ENCODE measurements at regions of chr9 and their contacts with region 1.

Region 1: DNA sequence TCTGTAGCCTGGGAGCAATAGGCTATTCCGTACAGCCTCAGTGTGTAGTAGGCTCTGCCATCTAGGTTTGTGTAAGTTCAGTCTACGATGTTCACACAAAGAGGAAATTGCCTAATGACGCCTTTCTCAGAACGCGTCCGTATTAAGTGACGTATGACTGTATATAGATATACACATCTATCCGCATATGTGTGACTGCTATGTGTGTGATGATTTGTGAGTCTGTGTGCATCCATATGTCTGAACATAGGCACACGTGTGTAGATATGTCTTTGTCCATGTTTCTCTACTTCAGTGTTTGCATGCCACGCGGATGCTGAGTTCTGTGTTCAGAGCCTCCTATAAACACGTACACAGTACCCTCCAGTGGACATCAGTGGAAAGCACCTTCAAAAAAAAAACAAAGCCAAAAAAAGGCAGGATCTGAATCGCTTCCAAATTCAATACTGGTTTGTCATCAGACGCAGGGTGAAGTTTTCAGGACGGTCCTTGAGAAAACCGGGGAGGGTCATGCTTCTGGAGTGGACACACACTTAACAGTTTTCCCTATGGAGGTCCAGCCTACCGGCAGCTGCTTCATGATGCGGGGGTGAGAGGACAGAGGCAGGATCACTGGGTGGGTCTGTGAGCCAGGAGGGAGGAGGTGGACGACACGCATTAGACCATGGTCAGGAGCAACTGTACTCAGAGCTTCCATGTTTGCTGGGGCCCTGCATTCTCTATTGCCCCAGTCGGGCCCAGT is 29.5 kb upstream of the ALDH1B1 start:
- DNase-seq: peak in 3 of 9 experiments; percentile 10 to 57 (median 36)
- ATAC-seq: peak; percentile 77
- H3K4me3 ChIP-seq: no peak overlapping the region
- H3K4me3 Mint-ChIP-seq: peak overlapping the region; percentile 72
- H3K27ac ChIP-seq: no peak overlapping the region
- H3K27ac Mint-ChIP-seq: no peak overlapping the region
- H3K4me1 ChIP-seq: no peaks in the 10 kb centered on the region
- H3K4me1 Mint-ChIP-seq: peaks cover 4% of the 10 kb centered on the region
- H3K27me3 ChIP-seq: no peaks in the 10 kb centered on the region
- H3K27me3 Mint-ChIP-seq: no peaks in the 10 kb centered on the region
- CTCF ChIP-seq: no peak

Region 2: DNA sequence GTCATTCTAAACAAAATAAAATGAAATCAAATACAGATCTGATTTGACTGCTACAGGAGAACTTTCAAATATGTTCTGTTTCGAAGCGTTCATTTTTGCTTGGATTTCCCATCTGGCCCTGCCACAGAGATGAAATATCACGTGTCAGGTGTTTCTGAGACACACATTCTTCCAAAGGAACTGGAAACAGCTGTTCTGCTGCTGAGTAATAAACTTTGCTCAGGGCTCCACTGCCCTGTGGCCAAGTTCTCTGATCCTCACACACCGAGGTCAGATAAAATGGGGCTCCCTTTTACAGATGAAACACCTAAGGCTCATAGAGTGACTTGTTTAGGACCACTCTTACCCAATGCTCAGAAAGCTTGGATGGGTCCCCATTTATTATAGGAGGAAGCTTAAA is 669.8 kb before region 1 on chr9:
- CTCF ChIA-PET with region 1: no interaction called
- POLR2A ChIA-PET with region 1: no interaction called
- intact Hi-C with region 1: no loop called
- DNase-seq: no peak
- ATAC-seq: no peak
- H3K4me3 ChIP-seq: no peak overlapping the region
- H3K4me3 Mint-ChIP-seq: no peak overlapping the region
- H3K27ac ChIP-seq: no peak overlapping the region
- H3K27ac Mint-ChIP-seq: no peak overlapping the region
- H3K4me1 ChIP-seq: no peaks in the 10 kb centered on the region
- H3K4me1 Mint-ChIP-seq: no peaks in the 10 kb centered on the region
- H3K27me3 ChIP-seq: peaks cover 0 to 5% of the 10 kb centered on the region in 2 experiments
- H3K27me3 Mint-ChIP-seq: peaks cover 24% of the 10 kb centered on the region
- CTCF ChIP-seq: no peak

Region 3: DNA sequence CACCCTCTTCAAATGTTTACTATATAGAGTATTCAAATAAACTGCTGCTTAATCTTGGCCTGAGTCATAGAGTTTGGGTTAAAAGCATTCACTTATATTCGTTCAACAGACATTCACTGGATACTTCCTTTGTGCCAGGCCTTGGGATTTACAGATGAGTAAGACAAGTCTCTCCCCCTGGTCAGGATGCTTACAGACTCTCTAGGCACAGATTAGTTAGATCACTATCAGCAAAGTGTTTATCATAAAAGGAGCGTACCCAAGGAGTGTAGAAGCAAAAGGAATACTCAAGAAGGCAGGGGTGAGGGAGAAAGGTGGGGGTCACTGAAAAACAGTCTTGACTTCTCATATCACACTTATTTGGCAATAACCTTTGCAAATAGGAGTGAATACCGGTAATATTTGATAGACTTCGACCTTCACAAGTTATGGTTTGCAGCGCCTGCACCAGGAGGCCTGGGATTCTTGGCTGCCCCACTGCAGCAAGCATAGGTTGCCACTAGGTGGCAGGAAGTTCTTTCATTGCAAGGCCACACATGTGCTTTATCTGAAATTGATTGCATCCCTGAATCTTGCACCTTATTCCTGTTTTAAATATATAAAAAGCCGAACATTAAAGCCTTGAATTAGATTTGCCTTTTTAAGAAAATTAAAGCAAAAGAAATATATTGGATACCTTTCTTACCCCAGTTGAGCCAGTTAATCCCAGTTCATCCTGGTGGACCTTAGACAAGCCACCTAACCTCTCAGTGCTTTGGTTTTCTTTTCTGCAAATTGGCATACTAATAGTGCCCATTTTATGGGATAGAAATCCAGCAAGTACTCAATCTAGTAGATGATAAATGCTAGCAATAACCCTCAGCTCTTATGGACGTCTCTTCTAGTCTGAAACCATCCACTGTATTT is 615.9 kb before region 1 on chr9:
- CTCF ChIA-PET with region 1: no interaction called
- POLR2A ChIA-PET with region 1: no interaction called
- intact Hi-C with region 1: loop called (anchors 5 to 10 kb)
- DNase-seq: peak; percentile 14 to 69 (median 51)
- ATAC-seq: peak; percentile 93
- H3K4me3 ChIP-seq: no peak overlapping the region
- H3K4me3 Mint-ChIP-seq: no peak overlapping the region
- H3K27ac ChIP-seq: no peak overlapping the region
- H3K27ac Mint-ChIP-seq: no peak overlapping the region
- H3K4me1 ChIP-seq: no peaks in the 10 kb centered on the region
- H3K4me1 Mint-ChIP-seq: no peaks in the 10 kb centered on the region
- H3K27me3 ChIP-seq: no peaks in the 10 kb centered on the region
- H3K27me3 Mint-ChIP-seq: no peaks in the 10 kb centered on the region
- CTCF ChIP-seq: peak; percentile 86

Region 4: GRCh38 chr9:38392235-38393127 is 29.5 kb after region 1 on chr9 and contains the start of gene ALDH1B1:
- CTCF ChIA-PET with region 1: no interaction called
- POLR2A ChIA-PET with region 1: no interaction called
- intact Hi-C with region 1: loop called in 1 of 2 experiments (anchors 5 kb)
- DNase-seq: peak; percentile 14 to 81 (median 61)
- ATAC-seq: peak; percentile 93
- H3K4me3 ChIP-seq: peak within 1 kb of the TSS; percentile 63 to 89
- H3K4me3 Mint-ChIP-seq: peak within 1 kb of the TSS; percentile 85
- H3K27ac ChIP-seq: peak within 1 kb of the TSS; percentile 11 to 46
- H3K27ac Mint-ChIP-seq: peak within 1 kb of the TSS; percentile 69
- H3K4me1 ChIP-seq: no peaks in the 10 kb centered on the region
- H3K4me1 Mint-ChIP-seq: peaks cover 17% of the 10 kb centered on the region
- H3K27me3 ChIP-seq: no peaks in the 10 kb centered on the region
- H3K27me3 Mint-ChIP-seq: no peaks in the 10 kb centered on the region
- CTCF ChIP-seq: no peak
- total RNA-seq, gene ALDH1B1: 0.50 to 0.71 TPM